A673 (cell line): ENCODE measurements at regions of chr10 and their contacts with region 1.

Region 1: DNA sequence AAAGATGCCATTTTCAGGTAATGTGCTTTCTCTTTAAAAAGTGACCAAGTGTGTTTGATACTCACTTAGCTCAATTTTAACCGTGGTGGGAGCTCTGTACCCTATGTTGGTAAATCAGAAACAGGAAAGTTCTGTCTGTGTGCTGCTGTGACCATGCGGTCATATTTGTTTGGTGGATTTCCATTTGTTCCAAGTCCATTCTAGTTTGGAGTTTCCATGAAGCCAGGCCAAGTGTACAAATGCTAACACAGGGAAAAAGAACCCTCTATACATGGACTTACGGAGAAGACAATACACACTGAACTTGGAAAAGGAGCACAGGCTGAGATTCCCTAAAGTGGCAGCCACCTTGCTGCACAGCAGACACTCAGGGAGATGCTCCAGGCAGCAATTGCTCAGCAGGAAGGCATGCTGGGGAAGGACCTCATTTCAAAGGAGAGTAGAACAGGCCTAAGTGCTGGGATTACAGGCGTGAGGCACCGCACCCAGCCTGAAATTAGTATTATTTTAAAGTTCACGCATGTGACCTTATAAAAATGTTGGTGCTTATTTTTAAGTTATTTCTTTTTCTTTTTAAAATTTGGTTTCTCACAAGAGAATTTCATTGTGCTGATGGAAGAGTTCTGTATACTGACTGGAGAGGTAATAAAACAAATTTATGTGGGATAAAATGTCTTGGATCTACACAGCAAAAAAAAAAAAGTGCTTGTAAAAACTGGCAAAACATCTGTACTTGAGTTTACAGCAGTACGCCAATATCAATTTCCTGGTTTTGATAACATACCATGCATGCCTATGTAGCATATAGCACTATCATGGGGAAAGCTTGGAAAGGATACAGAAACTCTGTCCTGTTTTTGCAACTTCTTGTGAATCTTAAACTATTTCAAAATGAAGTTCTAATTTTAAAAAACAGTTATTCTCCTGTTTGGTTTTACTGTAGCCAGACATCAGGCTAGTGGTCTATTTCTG is 436.2 kb downstream of the KCNMA1 start:
- DNase-seq: no peak
- H3K4me3 ChIP-seq: no peak overlapping the region
- H3K27ac ChIP-seq: no peak overlapping the region
- H3K4me1 ChIP-seq: no peaks in the 10 kb centered on the region
- H3K27me3 ChIP-seq: peaks cover 43% of the 10 kb centered on the region
- CTCF ChIP-seq: no peak

Region 2: DNA sequence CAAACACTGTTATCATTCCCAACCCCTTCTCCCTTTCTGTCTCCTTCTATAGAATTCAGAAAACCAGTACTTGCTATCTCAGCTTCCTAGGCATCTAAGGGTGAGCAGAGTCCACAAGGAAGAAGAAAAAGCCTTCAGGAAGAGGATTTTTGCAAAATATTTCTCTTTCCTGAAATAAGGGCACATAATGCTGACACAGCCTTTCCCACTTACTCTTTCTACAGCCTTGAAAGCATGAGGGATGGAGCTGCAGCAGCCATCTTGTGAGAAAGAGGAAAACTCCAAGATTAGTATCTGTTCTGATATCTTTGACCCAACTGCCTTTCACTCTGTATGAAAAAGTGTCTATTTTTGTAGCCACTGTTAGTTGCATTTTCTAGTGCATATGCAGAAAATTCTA is 390.0 kb before region 1 on chr10:
- CTCF ChIA-PET with region 1: no interaction called
- POLR2A ChIA-PET with region 1: no interaction called
- intact Hi-C with region 1: no loop called
- DNase-seq: no peak
- H3K4me3 ChIP-seq: no peak overlapping the region
- H3K27ac ChIP-seq: no peak overlapping the region
- H3K4me1 ChIP-seq: no peaks in the 10 kb centered on the region
- H3K27me3 ChIP-seq: no peaks in the 10 kb centered on the region
- CTCF ChIP-seq: no peak

Region 3: DNA sequence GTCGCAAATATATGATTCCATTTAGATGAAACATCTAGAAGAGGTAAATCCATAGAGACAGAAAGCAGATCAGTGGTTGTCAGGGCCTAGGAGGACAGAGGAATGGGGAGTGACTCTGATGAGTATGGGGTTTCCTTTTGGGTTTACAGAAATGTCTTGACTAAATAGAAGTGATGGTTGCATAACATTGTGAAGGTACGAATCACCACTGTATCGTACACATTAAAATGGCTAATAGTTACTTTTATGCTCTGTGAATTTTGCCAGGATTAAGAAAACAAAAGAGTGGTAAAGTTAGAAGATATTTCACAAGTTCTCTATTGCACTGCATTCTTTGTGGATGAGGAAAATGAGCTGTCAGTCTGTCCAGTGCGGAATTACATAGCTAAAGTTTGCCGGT is 28.8 kb after region 1 on chr10:
- CTCF ChIA-PET with region 1: no interaction called
- POLR2A ChIA-PET with region 1: interaction called, 12 read pairs
- intact Hi-C with region 1: no loop called
- DNase-seq: no peak
- H3K4me3 ChIP-seq: no peak overlapping the region
- H3K27ac ChIP-seq: no peak overlapping the region
- H3K4me1 ChIP-seq: no peaks in the 10 kb centered on the region
- H3K27me3 ChIP-seq: no peaks in the 10 kb centered on the region
- CTCF ChIP-seq: no peak